CD4-positive, alpha-beta memory T cell (primary cell): ENCODE measurements at regions of chr1 and their contacts with region 1.

Region 1: DNA sequence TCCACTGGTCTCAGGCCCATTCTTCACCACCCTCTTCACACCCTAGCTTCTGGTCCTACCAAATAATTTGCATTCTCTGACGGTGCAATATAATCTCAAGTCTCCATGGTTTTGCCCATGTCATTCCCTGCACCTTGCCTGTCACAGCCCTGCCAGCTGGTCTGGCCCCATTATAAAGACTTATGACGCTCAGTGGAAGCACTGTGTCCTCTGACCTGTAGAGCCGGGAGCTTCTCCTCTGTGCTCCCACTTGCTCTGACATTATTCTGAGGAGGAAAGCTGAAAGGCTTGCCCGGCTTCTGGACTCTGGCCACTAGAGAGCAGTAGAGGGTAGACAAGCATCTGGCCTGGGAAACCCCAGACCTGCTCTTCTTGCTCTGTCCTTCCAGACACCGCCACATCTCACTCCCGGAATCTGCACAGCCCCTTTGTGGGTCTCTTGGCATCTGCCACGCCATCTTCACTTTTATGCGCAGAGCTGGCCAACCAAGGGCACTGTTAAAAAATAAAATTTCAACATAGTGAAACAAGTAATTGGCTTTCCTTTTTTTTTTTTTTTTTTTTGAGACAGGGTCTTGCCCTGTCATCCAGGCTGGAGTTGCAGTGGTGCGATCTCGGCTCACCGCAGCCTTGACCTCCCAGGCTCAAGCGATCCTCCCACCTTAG is 44.4 kb downstream of the NENF start:
- DNase-seq: peak; percentile 67 to 78 (median 70)
- H3K4me3 ChIP-seq: no peak overlapping the region
- H3K4me3 Mint-ChIP-seq: peak overlapping the region in 6 of 8 donors; percentile 19 to 70 (median 45)
- H3K27ac ChIP-seq: no peak overlapping the region
- H3K27ac Mint-ChIP-seq: peak overlapping the region in 1 of 7 donors; percentile 32
- H3K4me1 ChIP-seq: peaks cover 8% of the 10 kb centered on the region
- H3K4me1 Mint-ChIP-seq: peaks cover 0 to 14% (median 5%) of the 10 kb centered on the region in 4 donors
- H3K27me3 ChIP-seq: no peaks in the 10 kb centered on the region
- H3K27me3 Mint-ChIP-seq: peaks cover 2 to 6% of the 10 kb centered on the region in 2 donors

Region 2: GRCh38 chr1:212463565-212464285 is 13.4 kb before region 1 on chr1:
- CTCF ChIA-PET with region 1: interaction called, 44 read pairs
- POLR2A ChIA-PET with region 1: no interaction called
- intact Hi-C with region 1: no loop called
- DNase-seq: no peak
- H3K4me3 ChIP-seq: no peak overlapping the region
- H3K4me3 Mint-ChIP-seq: no peak overlapping the region
- H3K27ac ChIP-seq: no peak overlapping the region
- H3K27ac Mint-ChIP-seq: no peak overlapping the region
- H3K4me1 ChIP-seq: no peaks in the 10 kb centered on the region
- H3K4me1 Mint-ChIP-seq: peaks cover 0 to 2% (median under 1%) of the 10 kb centered on the region in 4 donors
- H3K27me3 ChIP-seq: no peaks in the 10 kb centered on the region
- H3K27me3 Mint-ChIP-seq: peaks cover 0 to 1% of the 10 kb centered on the region in 2 donors

Region 3: DNA sequence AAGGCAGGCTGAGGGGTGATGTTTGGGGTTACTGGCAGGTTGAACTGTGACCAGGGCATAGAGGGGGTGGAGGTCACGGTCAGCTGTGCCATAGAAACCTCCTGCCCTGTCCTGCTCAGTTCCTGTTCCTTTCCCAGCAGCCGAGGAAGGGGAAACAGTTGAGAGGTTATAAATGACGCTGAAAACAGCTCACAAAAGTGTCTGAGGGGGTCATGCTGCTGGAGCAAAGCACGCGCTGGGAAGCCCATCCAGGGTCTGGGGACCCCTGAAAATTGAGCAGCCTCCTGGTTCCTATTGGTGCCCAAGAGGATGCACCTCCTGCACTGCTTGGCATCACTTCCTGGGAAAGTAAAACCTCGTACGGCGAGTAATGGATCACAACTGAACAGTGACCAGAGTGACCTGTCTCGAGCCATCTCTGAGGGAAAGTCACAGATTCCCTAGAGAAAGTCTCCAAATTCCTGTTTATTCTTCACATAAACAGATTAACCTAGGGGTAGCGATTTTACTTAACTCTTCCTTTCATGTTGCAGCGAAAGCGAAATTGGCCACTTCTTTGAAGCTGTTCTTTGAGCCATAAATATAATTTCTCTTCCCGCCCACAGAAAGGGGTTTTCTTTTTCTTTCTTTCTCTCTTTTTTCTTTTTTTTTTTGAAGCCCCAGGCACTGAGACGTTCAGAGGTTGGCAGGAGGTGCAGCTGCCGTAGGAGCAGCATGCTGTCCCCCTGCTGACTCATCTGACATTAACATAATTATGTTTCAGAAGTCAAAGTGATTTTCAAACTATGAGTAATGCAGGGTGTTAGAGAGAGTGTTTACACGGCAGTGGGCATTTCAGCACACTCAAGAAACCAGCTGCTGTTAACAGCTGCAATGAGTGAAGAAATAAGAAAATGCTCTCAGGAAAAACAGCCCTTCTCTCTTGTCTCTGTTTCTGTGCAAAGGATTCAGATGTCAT is 89.7 kb after region 1 on chr1:
- CTCF ChIA-PET with region 1: no interaction called
- POLR2A ChIA-PET with region 1: no interaction called
- intact Hi-C with region 1: loop called (anchors 2 kb)
- DNase-seq: peak; percentile 34 to 75 (median 41)
- H3K4me3 ChIP-seq: peak overlapping the region; percentile 63 to 82
- H3K4me3 Mint-ChIP-seq: peak overlapping the region; percentile 90 to 99 (median 96)
- H3K27ac ChIP-seq: peak overlapping the region; percentile 34
- H3K27ac Mint-ChIP-seq: peak overlapping the region; percentile 54 to 95 (median 93)
- H3K4me1 ChIP-seq: peaks cover 13% of the 10 kb centered on the region
- H3K4me1 Mint-ChIP-seq: peaks cover 7 to 15% (median 10%) of the 10 kb centered on the region in 4 donors
- H3K27me3 ChIP-seq: no peaks in the 10 kb centered on the region
- H3K27me3 Mint-ChIP-seq: no peaks in the 10 kb centered on the region

Region 4: GRCh38 chr1:212630158-212630900 is 153.2 kb after region 1 on chr1:
- CTCF ChIA-PET with region 1: interaction called, 39 read pairs
- POLR2A ChIA-PET with region 1: no interaction called
- intact Hi-C with region 1: loop called (anchors 1 kb)
- DNase-seq: peak; percentile 45 to 64 (median 54)
- H3K4me3 ChIP-seq: no peak overlapping the region
- H3K4me3 Mint-ChIP-seq: no peak overlapping the region
- H3K27ac ChIP-seq: no peak overlapping the region
- H3K27ac Mint-ChIP-seq: no peak overlapping the region
- H3K4me1 ChIP-seq: peaks cover 10% of the 10 kb centered on the region
- H3K4me1 Mint-ChIP-seq: peaks cover 0 to 10% (median 4%) of the 10 kb centered on the region in 4 donors
- H3K27me3 ChIP-seq: no peaks in the 10 kb centered on the region
- H3K27me3 Mint-ChIP-seq: peaks cover 2 to 9% of the 10 kb centered on the region in 2 donors

Region 5: DNA sequence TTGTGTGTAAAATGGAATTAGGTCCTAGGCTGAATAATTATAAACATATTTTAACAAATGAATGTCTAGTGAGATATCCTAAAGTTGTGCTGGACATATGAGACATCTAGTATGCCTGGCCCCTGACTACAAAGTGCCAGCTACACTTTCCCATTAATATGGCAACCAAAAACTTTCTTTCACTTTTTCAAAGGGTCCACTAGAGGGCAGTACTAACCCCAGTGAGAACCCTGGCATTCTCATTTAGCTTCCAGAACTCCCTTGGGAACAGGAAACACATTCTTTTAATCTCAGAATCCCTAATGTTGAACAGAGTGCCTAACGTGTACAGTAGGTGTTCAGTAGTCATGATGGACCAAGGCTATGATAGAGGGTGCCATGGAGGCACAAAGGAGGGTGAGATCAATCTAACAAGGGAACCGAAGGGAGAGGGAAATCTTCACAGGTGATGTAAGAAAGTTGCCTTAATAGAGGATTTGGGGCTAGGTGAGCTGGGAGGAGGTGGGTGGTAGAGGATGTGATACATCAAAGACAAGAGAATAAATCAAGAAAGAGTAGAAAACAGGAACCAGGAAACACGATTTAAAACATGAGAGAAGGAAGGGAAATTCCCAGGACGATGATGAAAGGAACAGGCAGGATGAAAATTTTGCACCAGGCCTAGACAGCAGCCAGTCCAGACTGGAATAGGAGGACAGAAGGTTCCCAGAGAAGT is 272.8 kb after region 1 on chr1:
- CTCF ChIA-PET with region 1: interaction called, 11 read pairs
- POLR2A ChIA-PET with region 1: no interaction called
- intact Hi-C with region 1: no loop called
- DNase-seq: peak; percentile 12 to 39 (median 26)
- H3K4me3 ChIP-seq: peak overlapping the region in 1 of 2 donors; percentile 12
- H3K4me3 Mint-ChIP-seq: peak overlapping the region in 6 of 8 donors; percentile 2 to 69 (median 28)
- H3K27ac ChIP-seq: peak overlapping the region; percentile 33
- H3K27ac Mint-ChIP-seq: peak overlapping the region; percentile 12 to 93 (median 84)
- H3K4me1 ChIP-seq: peaks cover 47% of the 10 kb centered on the region
- H3K4me1 Mint-ChIP-seq: peaks cover 37 to 46% (median 42%) of the 10 kb centered on the region in 4 donors
- H3K27me3 ChIP-seq: no peaks in the 10 kb centered on the region
- H3K27me3 Mint-ChIP-seq: no peaks in the 10 kb centered on the region

Region 6: DNA sequence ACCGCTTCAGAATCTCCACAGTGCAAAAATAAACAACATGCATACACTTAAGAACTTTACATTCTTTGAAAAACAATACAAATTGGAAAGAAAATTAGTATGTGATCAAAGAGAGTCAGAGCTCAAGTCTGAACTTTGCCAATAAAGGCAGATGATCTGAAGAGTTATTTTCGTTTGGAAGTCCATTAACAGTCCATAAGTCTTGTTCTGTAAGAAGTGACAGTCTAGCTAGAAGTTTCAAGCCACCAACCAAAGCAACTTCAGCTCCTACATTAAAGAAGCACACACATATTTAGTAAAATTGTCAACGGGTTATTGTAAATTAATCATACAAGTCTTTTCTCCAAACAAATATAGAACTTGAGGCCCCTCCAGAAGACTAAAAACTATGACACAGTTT is 517.8 kb after region 1 on chr1:
- CTCF ChIA-PET with region 1: interaction called, 27 read pairs
- POLR2A ChIA-PET with region 1: no interaction called
- intact Hi-C with region 1: loop called (anchors 2 kb)
- DNase-seq: no peak
- H3K4me3 ChIP-seq: no peak overlapping the region
- H3K4me3 Mint-ChIP-seq: no peak overlapping the region
- H3K27ac ChIP-seq: no peak overlapping the region
- H3K27ac Mint-ChIP-seq: no peak overlapping the region
- H3K4me1 ChIP-seq: no peaks in the 10 kb centered on the region
- H3K4me1 Mint-ChIP-seq: peaks cover 3 to 6% (median 5%) of the 10 kb centered on the region in 4 donors
- H3K27me3 ChIP-seq: no peaks in the 10 kb centered on the region
- H3K27me3 Mint-ChIP-seq: no peaks in the 10 kb centered on the region